Dorsolateral prefrontal cortex (tissue), 120 donors: ENCODE measurements at regions of chr12 and their contacts with region 1.

Region 1: GRCh38 chr12:509500-509899 is 49.8 kb downstream of the B4GALNT3 start:
- DNase-seq: no peak
- H3K4me3 ChIP-seq: no peak overlapping the region
- H3K27ac ChIP-seq: peak overlapping the region in 3 of 59 donors; percentile 27 to 36 (median 28)
- H3K27me3 ChIP-seq: no peaks in the 10 kb centered on the region
- CTCF ChIP-seq: no peak

Region 2: DNA sequence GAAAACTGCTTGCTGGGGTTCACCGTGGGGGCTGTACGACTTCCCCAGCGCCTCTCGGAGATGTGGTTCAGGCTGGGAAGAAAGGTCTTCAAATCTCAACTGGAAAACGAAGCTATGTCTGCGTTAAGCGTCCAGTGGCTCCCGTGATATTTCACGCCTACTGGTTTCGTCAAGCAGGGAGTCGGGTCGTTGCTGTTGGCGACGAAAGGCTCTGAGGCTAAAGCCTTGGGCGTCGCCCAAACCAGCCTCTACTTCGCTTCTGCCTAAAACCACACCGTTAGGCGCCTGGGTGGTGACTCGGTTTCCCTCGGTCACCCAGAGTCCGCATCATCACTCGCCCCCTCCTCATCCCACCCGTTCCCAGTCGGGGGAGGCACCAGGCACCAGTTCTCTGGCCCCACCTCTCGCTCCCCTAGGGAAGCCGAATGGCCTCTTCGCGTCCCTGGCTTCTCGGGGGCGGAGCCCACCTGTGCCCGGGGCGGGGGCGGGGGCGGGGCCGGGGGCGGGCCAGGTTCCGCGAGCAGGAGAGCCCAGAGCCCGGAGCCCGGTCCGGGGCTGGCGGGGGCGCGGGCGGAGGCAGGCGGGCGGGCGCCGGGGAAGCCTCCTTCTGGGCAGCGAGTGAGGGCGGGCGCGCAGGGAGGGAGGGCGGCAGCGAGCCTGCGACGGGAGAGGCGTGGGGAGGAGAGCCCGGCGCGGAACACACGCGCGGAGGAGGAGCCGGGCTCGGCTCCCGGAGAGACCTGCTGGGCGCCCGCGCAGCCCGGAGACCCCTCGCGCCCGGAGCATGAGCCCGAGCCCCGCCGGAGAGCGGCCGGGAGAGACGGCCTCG is 49.9 kb before region 1 on chr12 and contains the start of gene B4GALNT3:
- intact Hi-C with region 1: loop called in 1 of 2 experiments (anchors 5 kb)
- DNase-seq: peak in 5 of 10 donors; percentile 19 to 75 (median 58)
- H3K4me3 ChIP-seq: peak within 1 kb of the TSS; percentile 42 to 76 (median 60)
- H3K27ac ChIP-seq: peak within 1 kb of the TSS in 21 of 59 donors; percentile 9 to 73 (median 52)
- H3K27me3 ChIP-seq: peaks cover 0 to 6% (median 0%) of the 10 kb centered on the region in 45 donors
- CTCF ChIP-seq: no peak
- total RNA-seq, gene B4GALNT3: 4.8 to 25.5 (median 13.2) TPM

Region 3: DNA sequence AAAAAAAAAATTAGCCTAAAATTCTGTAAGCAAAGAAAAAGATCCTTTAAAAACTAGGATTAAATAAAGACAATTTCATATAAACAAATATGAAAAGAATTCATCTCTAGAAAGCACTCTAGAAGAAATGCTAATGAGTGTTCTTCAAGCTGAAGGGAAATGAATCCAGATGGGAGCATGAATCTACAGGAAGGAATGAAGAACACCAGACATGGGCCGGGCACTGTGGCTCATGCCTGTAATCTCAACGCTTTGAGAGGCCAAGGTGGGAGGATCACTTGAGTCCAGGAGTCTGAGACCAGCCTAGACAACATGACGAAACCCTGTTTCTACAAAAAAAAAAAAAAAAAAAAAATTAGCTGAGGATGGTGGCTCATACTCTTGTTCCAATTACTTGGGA is 787.7 kb after region 1 on chr12:
- intact Hi-C with region 1: no loop called
- DNase-seq: no peak
- H3K4me3 ChIP-seq: no peak overlapping the region
- H3K27ac ChIP-seq: no peak overlapping the region
- H3K27me3 ChIP-seq: no peaks in the 10 kb centered on the region
- CTCF ChIP-seq: no peak